ENCODE measurements at regions of chr4 and their contacts with region 1.

Region 1: DNA sequence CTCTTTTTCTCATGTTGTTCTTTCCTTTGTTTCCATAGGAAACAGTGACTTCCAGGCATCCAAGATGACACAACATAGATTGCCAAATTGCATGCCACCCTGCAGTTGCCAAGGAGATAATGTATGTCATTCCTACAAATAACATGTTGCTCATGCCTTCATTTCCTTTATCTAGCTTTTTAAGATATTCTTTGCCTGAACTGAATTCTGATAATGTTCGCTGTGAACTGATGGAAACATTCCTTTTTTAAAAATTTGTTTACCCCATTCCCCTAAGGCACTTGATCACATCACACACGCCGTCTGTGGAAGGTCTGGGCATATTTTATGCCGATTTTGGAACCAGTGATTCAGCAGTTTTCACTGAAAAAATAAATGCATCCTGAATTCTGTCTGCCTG is 38.0 kb upstream of the COX7B2 start:
- DNase-seq: no peak
- ATAC-seq: peak in 1 of 4 donors; percentile 49
- H3K4me3 ChIP-seq: no peak overlapping the region
- H3K27ac ChIP-seq: peak overlapping the region in 6 of 12 donors; percentile 17 to 66 (median 53)
- H3K4me1 ChIP-seq: peaks cover 0 to 47% (median 20%) of the 10 kb centered on the region in 12 donors
- H3K27me3 ChIP-seq: no peaks in the 10 kb centered on the region
- CTCF ChIP-seq: no peak
- POLR2A ChIP-seq: no peak

Region 2: DNA sequence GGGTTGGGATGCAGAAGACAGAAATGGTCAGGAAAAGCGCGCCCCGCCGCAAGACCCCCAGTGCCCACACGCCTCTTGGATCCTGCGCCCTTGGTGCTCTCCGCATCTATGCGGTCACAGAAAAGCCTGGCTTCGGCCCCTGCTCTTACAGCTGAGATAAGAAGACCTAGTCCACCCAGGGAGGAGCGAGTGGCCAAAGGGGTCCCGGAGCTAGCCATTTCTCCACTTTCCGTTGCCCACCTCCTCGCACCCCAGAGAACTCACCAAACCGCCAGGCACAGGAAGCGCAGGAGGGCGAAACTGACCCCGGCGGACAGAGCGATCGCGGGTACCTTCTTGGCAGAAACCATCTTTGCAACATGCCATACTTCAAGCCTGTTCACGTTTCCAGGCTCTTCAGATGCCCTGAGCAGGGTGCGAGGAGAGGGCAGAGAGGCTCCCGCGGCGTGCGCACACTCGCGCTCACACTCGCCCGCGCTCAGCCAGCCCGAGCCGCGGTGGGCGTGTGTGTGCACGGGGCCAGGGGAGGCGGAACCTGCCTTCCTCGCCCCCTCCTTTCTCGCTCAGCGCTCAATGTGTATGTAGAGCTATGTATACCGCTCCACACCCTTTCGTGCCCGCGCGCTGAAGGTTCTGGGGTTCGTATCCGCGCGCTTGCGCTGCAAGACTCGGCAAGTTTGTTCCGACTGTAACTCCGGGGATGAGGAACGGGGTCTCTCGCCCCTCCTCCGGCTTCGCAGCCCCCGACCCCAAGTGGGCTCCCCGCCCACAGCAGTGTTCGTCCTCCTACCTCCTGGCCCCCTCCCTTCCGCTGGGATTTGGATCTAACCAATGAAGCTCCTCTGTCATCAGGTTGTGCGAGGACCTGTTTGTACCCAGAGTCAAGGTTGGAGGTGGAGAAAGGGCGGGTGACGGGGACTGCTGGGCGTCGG is 46.3 kb after region 1 on chr4 and contains the start of gene GABRA4:
- intact Hi-C with region 1: loop called in 3 of 10 experiments (anchors 5 kb)
- DNase-seq: peak; percentile 23 to 56 (median 31)
- ATAC-seq: peak; percentile 49 to 88 (median 78)
- H3K4me3 ChIP-seq: peak within 1 kb of the TSS; percentile 37 to 66 (median 57)
- H3K27ac ChIP-seq: peak within 1 kb of the TSS; percentile 16 to 88 (median 80)
- H3K4me1 ChIP-seq: peaks cover 0 to 12% (median 0%) of the 10 kb centered on the region in 12 donors
- H3K27me3 ChIP-seq: peaks cover 0 to 35% (median 0%) of the 10 kb centered on the region in 9 donors
- CTCF ChIP-seq: no peak
- POLR2A ChIP-seq: no peak
- total RNA-seq, gene GABRA4: 9.3 to 43.7 (median 30.5) TPM

Region 3: GRCh38 chr4:47002593-47002992 is 55.6 kb after region 1 on chr4:
- intact Hi-C with region 1: loop called in 1 of 10 experiments (anchors 5 kb)
- DNase-seq: no peak
- ATAC-seq: peak in 2 of 4 donors; percentile 71 to 72
- H3K4me3 ChIP-seq: no peak overlapping the region
- H3K27ac ChIP-seq: no peak overlapping the region
- H3K4me1 ChIP-seq: peaks cover 0 to 12% (median 0%) of the 10 kb centered on the region in 12 donors
- H3K27me3 ChIP-seq: no peaks in the 10 kb centered on the region
- CTCF ChIP-seq: peak in 9 of 12 donors; percentile 10 to 58 (median 44)
- POLR2A ChIP-seq: no peak